Psoas muscle (tissue), 8 donors: ENCODE measurements at regions of chr14 and their contacts with region 1.

Region 1: DNA sequence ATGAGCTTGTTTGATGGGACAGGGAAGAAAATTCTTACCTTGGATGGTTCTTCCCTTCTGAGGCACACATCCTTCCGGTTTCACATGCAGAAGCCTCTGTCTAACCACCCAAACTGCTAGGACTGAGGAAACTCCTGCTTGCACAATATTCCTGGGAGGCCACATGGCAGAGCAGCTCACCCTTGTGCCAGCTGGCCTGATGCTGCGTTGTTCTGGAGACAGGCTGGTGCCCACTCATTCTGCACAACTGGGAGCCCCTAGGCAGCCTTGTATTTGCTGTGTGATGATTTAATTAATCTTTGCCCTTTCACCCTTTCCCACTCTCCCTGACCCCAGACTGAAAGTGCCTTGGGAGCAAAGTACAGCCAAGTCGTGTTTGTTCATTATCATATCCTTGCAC is 130.8 kb downstream of the RTN1 start:
- DNase-seq: peak in 1 of 2 donors; percentile 19
- ATAC-seq: no peak
- H3K4me3 ChIP-seq: no peak overlapping the region
- H3K27ac ChIP-seq: no peak overlapping the region
- H3K4me1 ChIP-seq: no peaks in the 10 kb centered on the region
- H3K27me3 ChIP-seq: peaks cover 0 to 3% (median 0%) of the 10 kb centered on the region in 3 donors
- CTCF ChIP-seq: no peak

Region 2: DNA sequence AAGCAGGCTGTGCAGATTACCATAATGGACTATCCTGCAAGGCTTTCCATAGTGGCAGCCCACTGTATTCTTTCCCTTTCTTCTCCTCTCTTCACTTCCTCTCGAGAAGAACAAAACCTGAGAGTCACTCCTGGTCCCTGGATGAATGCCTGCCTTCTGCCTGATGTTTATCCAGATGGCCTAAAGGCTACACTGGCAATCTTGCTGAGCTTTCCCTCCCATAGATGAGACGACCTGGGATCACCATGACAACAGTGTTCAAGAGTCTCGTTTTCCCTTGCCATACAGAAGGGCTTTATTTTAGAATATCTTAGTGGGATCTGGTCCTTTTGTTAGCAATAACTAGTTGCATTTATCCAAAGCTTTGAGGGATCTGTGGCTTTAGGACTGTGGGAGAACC is 11.5 kb before region 1 on chr14:
- intact Hi-C with region 1: loop called in 1 of 2 experiments (anchors 1 kb)
- DNase-seq: no peak
- ATAC-seq: no peak
- H3K4me3 ChIP-seq: no peak overlapping the region
- H3K27ac ChIP-seq: no peak overlapping the region
- H3K4me1 ChIP-seq: no peaks in the 10 kb centered on the region
- H3K27me3 ChIP-seq: no peaks in the 10 kb centered on the region
- CTCF ChIP-seq: no peak